WTC11 (cell line): ENCODE measurements at regions of chr11 and their contacts with region 1.

Region 1: GRCh38 chr11:106076919-106077608 is at the start of gene KBTBD3:
- DNase-seq: peak; percentile 99
- ATAC-seq: peak; percentile 95
- H3K4me3 Mint-ChIP-seq: peak within 1 kb of the TSS; percentile 85
- H3K27ac Mint-ChIP-seq: peak within 1 kb of the TSS; percentile 99
- H3K4me1 Mint-ChIP-seq: peaks cover 35% of the 10 kb centered on the region
- H3K27me3 Mint-ChIP-seq: no peaks in the 10 kb centered on the region
- CTCF ChIP-seq: no peak; the same call in 1 of the 2 replicates
- total RNA-seq, gene KBTBD3: 3.8 to 4.9 TPM (median 4.1 TPM) in 3 replicates

Region 2: GRCh38 chr11:105960252-105961245 is 116.5 kb before region 1 on chr11:
- CTCF ChIA-PET with region 1: no interaction called
- POLR2A ChIA-PET with region 1: interaction called, 12 read pairs
- DNase-seq: peak; percentile 86
- ATAC-seq: peak; percentile 93
- H3K4me3 Mint-ChIP-seq: peak overlapping the region; percentile 10; the same call in 1 of the 2 replicates
- H3K27ac Mint-ChIP-seq: peak overlapping the region; percentile 37; the same call in 1 of the 2 replicates
- H3K4me1 Mint-ChIP-seq: peaks cover 27% of the 10 kb centered on the region
- H3K27me3 Mint-ChIP-seq: no peaks in the 10 kb centered on the region; the same call in 1 of the 2 replicates
- CTCF ChIP-seq: no peak

Region 3: DNA sequence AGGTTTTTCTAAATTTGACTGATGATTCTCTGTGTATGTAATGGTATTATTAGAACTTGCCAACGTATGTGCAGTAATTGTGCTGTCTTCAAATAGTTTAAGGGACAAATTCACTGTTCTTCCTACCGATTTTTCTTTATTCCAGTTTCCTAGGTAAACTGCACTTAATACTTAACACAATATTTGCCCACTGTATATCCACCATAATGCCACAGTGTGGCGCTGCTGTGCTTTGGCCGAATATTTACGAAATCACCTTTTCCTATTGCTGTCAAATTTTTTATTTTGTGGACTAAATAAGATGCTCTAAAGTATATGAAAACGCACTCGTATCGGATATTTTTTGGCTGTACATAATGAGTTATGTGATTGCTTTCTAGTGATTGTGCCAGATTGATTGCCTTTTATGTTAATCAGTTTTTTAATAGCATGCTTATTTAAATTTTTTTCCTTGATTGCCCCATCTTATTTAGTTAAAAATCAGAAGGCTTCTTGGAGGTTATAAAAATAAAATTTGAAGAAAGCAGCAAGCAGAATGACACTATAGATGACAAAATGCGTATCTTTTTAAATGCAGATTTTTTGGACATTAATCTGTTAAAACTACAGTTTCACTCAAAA is 10.9 kb after region 1 on chr11:
- CTCF ChIA-PET with region 1: interaction called, 11 read pairs
- POLR2A ChIA-PET with region 1: no interaction called
- DNase-seq: peak; percentile 42
- ATAC-seq: peak; percentile 61; the same call in 1 of the 2 replicates
- H3K4me3 Mint-ChIP-seq: no peak overlapping the region
- H3K27ac Mint-ChIP-seq: no peak overlapping the region
- H3K4me1 Mint-ChIP-seq: peaks cover 15% of the 10 kb centered on the region
- H3K27me3 Mint-ChIP-seq: no peaks in the 10 kb centered on the region
- CTCF ChIP-seq: peak; percentile 75